Testis (tissue), 5 donors: ENCODE measurements at regions of chr12 and their contacts with region 1.

Region 1: DNA sequence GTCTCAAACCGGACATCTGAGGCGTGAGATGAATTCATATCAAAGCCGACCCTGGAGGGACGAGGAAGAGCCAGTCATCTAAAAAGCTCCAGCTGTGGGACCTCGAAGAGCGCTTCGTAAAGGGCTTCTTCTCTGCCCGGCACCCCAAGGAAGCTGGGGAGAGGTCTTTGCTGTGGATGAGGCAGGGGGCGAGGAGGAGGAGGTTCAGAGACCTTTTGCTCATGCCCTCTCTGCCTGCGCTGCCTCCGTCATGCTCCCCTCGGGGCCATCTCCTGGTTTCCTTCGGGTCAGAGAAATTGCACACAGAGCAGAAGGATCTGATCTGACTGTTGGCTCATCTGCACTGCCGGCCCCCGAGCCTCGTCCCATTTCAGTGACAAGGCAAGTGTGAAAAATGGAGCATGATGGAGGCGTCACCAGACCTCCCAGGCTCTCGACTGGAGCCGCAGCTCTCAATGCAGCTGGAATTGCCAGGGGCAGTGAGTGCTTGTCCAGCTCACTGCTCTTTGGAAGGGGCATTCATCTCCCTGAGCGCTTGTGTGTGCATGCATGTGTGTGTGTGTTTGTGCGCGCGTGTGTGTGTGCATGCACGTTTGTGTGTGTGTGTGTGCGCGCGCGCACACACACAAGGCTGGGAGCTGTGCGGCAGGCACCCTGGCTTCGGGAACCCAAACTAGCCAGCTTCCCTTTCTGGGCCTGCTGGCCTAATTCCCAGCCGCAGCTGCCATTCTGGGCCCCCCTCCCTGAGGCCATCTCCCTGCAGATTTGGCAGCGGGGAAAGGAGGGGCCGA is 9.2 kb downstream of the CABP1 start:
- DNase-seq: no peak
- H3K4me3 ChIP-seq: peak overlapping the region in 1 of 2 donors; percentile 17
- H3K27ac ChIP-seq: no peak overlapping the region
- H3K4me1 ChIP-seq: peaks cover 17% of the 10 kb centered on the region
- H3K27me3 ChIP-seq: no peaks in the 10 kb centered on the region
- CTCF ChIP-seq: peak in 1 of 3 experiments; percentile 39
- POLR2A ChIP-seq: no peak

Region 2: DNA sequence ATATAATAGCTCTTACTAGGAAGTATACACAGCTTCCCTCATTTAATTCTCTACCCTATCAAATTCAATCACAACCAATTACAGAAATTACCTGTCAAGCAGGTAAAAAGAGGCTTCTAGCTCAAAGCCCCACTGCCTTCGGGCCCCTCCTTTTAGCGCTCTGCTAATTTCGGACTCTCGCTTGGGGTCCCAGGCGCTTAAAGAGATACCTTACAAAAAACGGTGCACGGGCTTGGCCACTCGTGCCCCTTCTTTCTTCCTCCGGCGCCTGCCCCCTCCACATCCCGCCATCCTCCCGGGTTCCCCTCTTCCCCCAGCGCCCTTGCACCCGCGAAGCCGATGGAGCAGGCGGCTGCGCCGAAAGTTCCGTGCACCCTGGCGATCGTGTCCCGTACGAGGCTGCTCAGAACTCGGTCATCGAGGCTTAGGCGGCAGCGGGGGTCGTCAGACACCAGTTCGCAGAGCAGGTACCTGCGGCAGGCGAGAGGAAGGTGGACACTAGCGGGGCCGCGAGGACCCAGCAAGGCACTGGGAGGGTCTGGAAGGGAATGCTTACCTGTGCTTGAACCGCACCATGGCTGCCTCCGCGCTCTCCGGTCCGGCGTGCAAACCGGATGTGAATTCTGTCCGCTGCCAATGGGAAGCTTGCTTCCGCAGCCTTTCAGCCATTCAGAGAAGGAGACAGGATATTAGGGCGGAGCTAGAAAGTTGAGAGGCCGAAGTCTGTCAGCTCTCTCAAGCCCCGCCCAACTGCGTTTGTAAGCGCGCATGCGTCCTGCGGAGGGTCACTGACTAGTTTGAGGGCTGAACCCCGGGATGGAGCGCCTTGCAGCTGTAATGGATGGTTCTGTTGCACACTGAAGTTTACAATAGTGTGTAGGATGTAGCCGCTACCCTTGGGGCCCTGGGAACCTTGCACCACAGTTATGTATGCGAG is 68.6 kb before region 1 on chr12 and contains the start of gene POP5:
- intact Hi-C with region 1: loop called (anchors 5 kb)
- DNase-seq: peak; percentile 98
- H3K4me3 ChIP-seq: peak within 1 kb of the TSS; percentile 79 to 92
- H3K27ac ChIP-seq: no peak within 1 kb of the TSS
- H3K4me1 ChIP-seq: peaks cover 22% of the 10 kb centered on the region
- H3K27me3 ChIP-seq: no peaks in the 10 kb centered on the region
- CTCF ChIP-seq: no peak
- POLR2A ChIP-seq: no peak
- total RNA-seq, gene POP5: 36.7 to 37.8 TPM

Region 3: GRCh38 chr12:120725659-120726509 is 76.2 kb after region 1 on chr12 and contains the start of gene ACADS:
- intact Hi-C with region 1: no loop called
- DNase-seq: peak; percentile 93
- H3K4me3 ChIP-seq: peak within 1 kb of the TSS; percentile 62 to 70
- H3K27ac ChIP-seq: peak within 1 kb of the TSS; percentile 68 to 72
- H3K4me1 ChIP-seq: peaks cover 6% of the 10 kb centered on the region
- H3K27me3 ChIP-seq: no peaks in the 10 kb centered on the region
- CTCF ChIP-seq: no peak
- POLR2A ChIP-seq: no peak
- total RNA-seq, gene ACADS: 28.3 to 30.2 TPM